Tibial artery (tissue), 4 donors: ENCODE measurements at regions of chr13 and their contacts with region 1.

Region 1: GRCh38 chr13:34294483-34295129 is 476.7 kb downstream of the RFC3 start:
- DNase-seq: no peak
- H3K4me3 ChIP-seq: peak overlapping the region in 1 of 2 donors; percentile 12
- H3K27ac ChIP-seq: no peak overlapping the region
- H3K4me1 ChIP-seq: no peaks in the 10 kb centered on the region
- H3K27me3 ChIP-seq: no peaks in the 10 kb centered on the region
- CTCF ChIP-seq: no peak

Region 2: DNA sequence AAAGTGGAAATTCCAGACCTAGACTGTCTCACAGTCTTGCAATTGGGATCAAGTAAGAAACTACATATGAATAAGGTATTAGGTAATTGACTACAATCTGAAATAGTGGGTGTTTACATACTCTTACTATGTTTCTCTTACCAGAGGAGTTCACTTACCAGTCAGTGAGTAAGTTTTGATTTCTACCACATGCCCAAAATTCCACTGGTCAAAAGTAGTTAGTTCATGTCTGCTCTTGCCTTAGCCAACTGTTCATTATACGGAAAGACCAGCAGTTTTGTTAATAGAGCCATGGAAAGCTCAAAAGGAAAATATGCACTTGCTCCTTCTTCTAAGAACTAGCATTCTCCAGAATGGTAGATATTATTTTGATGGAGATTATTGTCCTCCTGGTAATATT is 14.1 kb after region 1 on chr13:
- intact Hi-C with region 1: loop called (anchors 1 kb)
- DNase-seq: no peak
- H3K4me3 ChIP-seq: no peak overlapping the region
- H3K27ac ChIP-seq: no peak overlapping the region
- H3K4me1 ChIP-seq: no peaks in the 10 kb centered on the region
- H3K27me3 ChIP-seq: no peaks in the 10 kb centered on the region
- CTCF ChIP-seq: no peak

Region 3: DNA sequence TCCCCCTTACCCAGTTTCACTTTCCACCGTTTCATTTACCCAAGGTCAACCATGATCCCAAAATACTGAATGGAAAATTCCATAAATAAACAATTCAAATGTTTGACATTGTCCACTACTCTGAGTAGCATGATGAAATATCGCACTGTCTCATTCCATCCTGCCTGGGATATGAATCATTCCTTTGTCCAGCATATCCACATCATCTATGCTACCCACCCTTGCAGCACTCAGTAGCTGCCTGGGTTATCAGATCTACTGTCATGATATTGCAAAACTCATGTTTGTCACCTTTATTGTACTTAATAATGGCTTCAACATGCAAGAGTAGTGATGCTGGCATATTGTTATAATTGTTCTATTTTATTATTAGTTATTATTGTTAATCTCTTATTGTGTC is 383.5 kb after region 1 on chr13:
- intact Hi-C with region 1: no loop called
- DNase-seq: no peak
- H3K4me3 ChIP-seq: no peak overlapping the region
- H3K27ac ChIP-seq: no peak overlapping the region
- H3K4me1 ChIP-seq: no peaks in the 10 kb centered on the region
- H3K27me3 ChIP-seq: no peaks in the 10 kb centered on the region
- CTCF ChIP-seq: no peak